Breast epithelium (tissue), 4 donors: ENCODE measurements at regions of chr6 and their contacts with region 1.

Region 1: GRCh38 chr6:108039681-108040080 is 34.9 kb downstream of the OSTM1 start:
- DNase-seq: no peak
- H3K4me3 ChIP-seq: no peak overlapping the region
- H3K27ac ChIP-seq: no peak overlapping the region
- H3K4me1 ChIP-seq: no peaks in the 10 kb centered on the region
- H3K27me3 ChIP-seq: no peaks in the 10 kb centered on the region
- CTCF ChIP-seq: no peak
- POLR2A ChIP-seq: no peak

Region 2: GRCh38 chr6:107523054-107523791 is 516.5 kb before region 1 on chr6:
- intact Hi-C with region 1: no loop called
- DNase-seq: no peak
- H3K4me3 ChIP-seq: no peak overlapping the region
- H3K27ac ChIP-seq: no peak overlapping the region
- H3K4me1 ChIP-seq: no peaks in the 10 kb centered on the region
- H3K27me3 ChIP-seq: no peaks in the 10 kb centered on the region
- CTCF ChIP-seq: no peak
- POLR2A ChIP-seq: no peak

Region 3: DNA sequence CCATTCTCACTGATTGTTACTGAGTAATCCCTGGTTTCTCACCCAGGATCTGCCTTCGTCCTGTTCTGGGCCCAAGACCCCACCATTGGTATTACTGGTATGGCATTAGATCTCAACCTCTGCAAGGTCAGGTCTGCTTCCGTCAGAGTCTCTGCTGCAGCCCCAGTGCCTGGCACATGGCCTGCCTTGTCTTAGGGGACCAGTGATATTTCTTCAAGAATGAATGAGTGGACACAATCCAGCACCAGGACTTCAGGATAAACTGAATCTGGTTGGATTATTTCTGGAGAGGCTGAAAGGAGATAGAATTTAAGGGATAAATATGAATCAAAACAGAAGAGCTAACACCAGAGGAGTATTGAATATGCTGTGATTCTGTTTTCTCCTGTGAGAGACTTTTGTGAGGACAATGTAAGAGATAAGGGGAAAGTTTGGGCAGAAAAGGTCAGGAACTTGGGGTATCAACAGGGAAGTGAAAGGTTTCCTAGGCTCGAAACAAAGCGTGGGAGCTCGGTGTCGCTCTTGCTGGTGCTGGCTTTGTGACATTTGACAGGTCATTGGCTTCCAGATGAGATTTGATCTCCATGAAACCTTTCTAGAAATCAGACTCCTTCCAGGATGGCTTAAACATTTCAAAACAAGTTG is 19.1 kb before region 1 on chr6:
- intact Hi-C with region 1: no loop called
- DNase-seq: no peak
- H3K4me3 ChIP-seq: no peak overlapping the region
- H3K27ac ChIP-seq: no peak overlapping the region
- H3K4me1 ChIP-seq: no peaks in the 10 kb centered on the region
- H3K27me3 ChIP-seq: no peaks in the 10 kb centered on the region
- CTCF ChIP-seq: no peak
- POLR2A ChIP-seq: no peak

Region 4: DNA sequence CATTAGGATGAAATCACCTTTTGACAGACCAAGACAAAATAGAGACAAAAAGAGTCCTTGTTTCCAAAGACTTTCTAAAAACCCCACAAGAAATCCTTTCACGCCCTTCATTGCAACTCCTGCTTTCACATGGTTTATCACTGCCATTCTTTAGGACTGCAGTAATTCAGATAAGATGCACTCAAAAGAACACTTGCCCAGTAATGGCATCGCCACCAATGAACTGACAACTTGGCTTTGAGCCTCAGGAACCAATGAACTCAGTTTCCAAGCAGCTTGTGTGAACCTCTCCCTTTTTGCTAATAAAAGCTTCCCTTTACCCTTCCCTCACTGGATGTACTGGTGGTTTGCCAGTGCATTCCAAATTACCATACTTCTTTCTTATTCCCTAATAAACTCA is 13.0 kb after region 1 on chr6:
- intact Hi-C with region 1: no loop called
- DNase-seq: no peak
- H3K4me3 ChIP-seq: no peak overlapping the region
- H3K27ac ChIP-seq: no peak overlapping the region
- H3K4me1 ChIP-seq: no peaks in the 10 kb centered on the region
- H3K27me3 ChIP-seq: no peaks in the 10 kb centered on the region
- CTCF ChIP-seq: no peak
- POLR2A ChIP-seq: no peak

Region 5: GRCh38 chr6:109660526-109661320 is 1621.0 kb after region 1 on chr6:
- intact Hi-C with region 1: loop called (anchors 5 kb)
- DNase-seq: no peak
- H3K4me3 ChIP-seq: no peak overlapping the region
- H3K27ac ChIP-seq: no peak overlapping the region
- H3K4me1 ChIP-seq: no peaks in the 10 kb centered on the region
- H3K27me3 ChIP-seq: no peaks in the 10 kb centered on the region
- CTCF ChIP-seq: no peak
- POLR2A ChIP-seq: no peak